ENCODE measurements at regions of chr11 and their contacts with region 1.

Region 1: GRCh38 chr11:66842896-66843775 is at the start of gene RCE1:
- DNase-seq: peak; percentile 98
- ATAC-seq: peak; percentile 86
- H3K4me3 Mint-ChIP-seq: peak within 1 kb of the TSS; percentile 98
- H3K27ac Mint-ChIP-seq: peak within 1 kb of the TSS; percentile 98
- H3K4me1 Mint-ChIP-seq: peaks cover 40% of the 10 kb centered on the region
- H3K27me3 Mint-ChIP-seq: no peaks in the 10 kb centered on the region
- total RNA-seq, gene RCE1: 23.0 to 27.2 TPM

Region 2: DNA sequence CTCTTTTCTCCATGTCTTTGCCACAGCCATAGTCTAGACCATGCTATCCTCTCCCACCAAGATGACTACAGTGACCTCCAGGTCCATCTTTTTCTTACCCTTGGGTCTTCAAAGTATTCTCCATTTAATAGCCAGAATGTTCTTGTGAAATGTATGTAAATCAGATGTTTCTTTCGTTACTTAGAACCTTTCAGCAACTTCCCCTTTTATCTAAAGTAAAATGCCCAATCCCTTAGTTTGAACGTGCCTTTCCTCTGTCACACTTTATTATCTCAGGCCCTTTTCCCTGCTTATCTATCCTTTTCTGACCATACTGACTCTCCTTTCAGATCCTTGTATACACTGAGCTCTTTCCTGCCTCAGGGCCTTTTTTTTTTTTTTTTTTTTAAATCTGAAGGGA is 183.4 kb before region 1 on chr11:
- POLR2A ChIA-PET with region 1: no interaction called
- DNase-seq: no peak
- ATAC-seq: no peak
- H3K4me3 Mint-ChIP-seq: no peak overlapping the region
- H3K27ac Mint-ChIP-seq: no peak overlapping the region
- H3K4me1 Mint-ChIP-seq: peaks cover 7% of the 10 kb centered on the region
- H3K27me3 Mint-ChIP-seq: no peaks in the 10 kb centered on the region

Region 3: DNA sequence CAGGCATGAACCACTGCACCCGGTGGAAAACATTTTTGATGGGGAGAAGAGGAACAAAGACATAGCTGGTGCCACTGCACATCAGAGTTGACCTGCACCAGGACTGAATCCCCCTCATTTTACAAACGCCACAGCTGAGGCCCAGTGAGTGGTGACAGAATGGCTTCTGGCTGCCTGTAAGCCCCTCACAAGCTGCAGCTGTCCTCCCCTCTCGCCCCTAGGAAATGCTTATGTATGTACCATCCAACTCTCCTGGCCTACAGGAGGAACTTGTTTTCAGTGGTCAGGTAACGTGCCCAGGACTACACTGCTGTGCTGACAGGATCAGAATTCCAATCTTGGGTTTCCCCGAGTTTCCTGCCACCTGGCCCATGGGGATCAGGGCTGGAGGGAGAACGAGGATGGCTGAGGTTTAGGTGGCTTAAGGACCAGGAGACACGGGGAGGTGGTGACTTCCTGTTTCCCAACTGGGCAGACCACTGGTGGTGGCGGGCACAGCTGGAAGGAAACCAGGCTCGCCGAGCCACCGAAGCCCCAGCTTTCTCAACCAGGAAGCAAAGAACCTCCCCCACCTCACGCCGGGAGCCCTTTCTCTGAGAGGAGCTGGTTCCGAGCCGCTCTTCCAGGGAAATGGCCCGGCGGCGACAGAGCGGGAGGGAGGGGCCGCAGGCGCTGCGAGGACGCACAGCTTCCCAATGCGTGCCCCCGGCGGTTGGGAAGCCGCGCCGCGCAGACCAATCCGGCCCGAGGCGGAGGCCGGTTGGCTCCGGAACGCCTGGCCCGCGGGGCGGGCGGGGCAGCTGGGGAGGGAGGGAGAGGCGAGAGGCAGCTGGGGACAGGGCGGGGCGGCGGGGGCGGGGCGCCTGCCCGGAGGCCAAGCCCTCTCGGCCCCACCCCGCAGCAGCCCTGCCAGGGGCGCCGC is 12.7 kb after region 1 on chr11:
- POLR2A ChIA-PET with region 1: interaction called, 90 read pairs
- DNase-seq: peak; percentile 91
- ATAC-seq: peak; percentile 83
- H3K4me3 Mint-ChIP-seq: peak overlapping the region; percentile 86
- H3K27ac Mint-ChIP-seq: peak overlapping the region; percentile 89
- H3K4me1 Mint-ChIP-seq: peaks cover 15% of the 10 kb centered on the region
- H3K27me3 Mint-ChIP-seq: no peaks in the 10 kb centered on the region

Region 4: DNA sequence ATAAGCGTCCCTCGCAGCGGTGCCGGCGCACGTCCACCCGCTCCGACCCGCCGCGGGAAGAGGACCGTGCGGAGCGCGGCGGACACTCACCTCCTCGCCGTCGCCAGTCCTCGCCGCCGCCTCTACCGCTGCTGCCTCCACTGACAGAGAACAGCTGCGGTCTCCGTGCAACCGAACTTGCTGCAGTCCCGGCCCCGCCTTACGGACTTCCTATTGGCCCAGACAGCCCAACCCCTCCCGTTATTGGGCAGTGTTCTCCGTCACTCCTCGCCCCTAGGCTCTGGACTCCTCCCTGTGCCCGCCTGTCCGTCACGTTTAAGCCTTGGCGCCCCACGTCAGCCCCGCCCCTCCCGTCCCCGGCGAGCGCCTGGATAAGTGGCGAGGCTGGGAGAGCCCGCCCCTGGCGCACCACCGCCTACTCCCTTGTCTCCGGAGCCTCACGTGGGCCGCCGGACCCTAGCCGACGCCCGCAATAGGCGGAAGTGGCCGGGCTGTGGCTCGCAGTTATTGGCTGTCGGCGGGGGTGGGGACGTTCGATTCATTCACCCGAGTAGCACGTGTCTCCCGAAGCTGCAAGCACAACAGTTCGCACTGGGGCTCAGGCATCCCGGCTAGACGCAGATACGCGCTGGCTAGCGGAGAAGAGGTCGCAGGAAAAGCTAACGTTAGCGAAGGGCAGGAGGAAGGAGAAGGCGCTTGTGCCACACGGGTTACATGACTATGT is 115.3 kb after region 1 on chr11 and contains the start of gene PC:
- POLR2A ChIA-PET with region 1: interaction called, 11 read pairs
- DNase-seq: peak; percentile 96
- ATAC-seq: peak; percentile 97
- H3K4me3 Mint-ChIP-seq: peak within 1 kb of the TSS; percentile 90
- H3K27ac Mint-ChIP-seq: peak within 1 kb of the TSS; percentile 76
- H3K4me1 Mint-ChIP-seq: peaks cover 16% of the 10 kb centered on the region
- H3K27me3 Mint-ChIP-seq: peaks cover 12% of the 10 kb centered on the region
- total RNA-seq, gene PC: 8.2 to 9.0 TPM